Posterior cingulate gyrus (tissue), 11 donors: ENCODE measurements at regions of chr1 and their contacts with region 1.

Region 1: GRCh38 chr1:218345673-218346390 is 696 bp downstream of the TGFB2 start:
- DNase-seq: peak; percentile 28 to 92 (median 60)

Region 2: DNA sequence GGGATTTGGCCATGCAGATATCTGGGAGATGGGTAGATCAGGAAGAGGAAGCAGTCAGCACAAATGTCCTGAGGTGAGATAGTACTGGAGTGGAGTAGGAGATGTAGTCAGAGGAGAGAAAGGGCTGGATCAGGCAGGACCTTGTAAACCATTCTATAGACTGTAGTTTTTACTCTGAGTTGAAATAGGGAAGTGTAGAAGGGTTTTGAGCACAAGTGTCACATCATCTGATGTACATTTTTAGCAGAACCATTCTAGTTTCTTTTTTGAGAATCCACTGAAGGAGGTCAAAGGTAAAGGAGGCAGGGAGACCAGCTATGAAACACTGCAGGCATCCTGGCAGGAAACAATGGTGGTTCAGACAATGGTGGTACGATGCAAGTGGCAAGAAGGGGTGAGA is 255.4 kb before region 1 on chr1:
- intact Hi-C with region 1: no loop called
- DNase-seq: no peak

Region 3: DNA sequence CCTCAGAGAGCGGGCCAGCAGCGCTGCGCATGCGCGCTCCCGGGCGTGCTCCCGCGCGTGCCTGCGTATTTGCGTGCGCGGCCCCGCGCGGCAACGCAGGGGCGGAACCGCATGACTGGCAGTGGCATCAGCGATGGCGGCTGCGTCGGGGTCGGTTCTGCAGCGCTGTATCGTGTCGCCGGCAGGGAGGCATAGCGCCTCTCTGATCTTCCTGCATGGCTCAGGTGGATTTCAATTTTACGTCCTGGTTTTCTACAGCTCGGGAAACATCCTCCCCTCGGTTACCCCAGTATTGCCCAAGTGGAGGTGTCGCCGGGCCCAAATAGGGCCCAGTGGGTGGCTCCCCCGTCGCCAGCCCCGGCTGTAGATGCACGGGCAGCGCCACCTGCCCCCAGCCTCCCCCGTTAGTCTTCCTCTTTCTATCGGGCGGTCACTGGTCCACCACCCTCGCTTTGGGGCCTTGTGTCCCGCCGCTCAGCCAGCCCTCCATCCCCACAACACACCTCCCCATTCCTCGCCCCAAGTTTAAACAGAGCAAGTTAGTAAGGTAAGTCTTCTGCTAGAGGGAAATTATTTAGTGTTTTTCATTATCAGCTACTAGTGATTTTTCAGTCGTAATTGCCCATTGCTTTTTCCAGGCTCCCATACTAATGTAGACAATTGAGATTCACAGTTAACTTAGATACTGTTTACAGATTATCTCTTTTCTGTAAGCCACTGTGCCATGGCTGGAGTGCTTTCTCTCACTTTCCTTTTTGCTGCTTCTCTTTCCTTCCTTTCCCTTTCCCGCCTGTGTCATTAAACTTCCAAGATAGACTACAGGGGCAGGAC is 828.1 kb after region 1 on chr1 and contains the start of gene LYPLAL1:
- intact Hi-C with region 1: loop called (anchors 5 kb)
- DNase-seq: peak; percentile 79 to 98 (median 86)